CD14-positive monocyte (primary cell): ENCODE measurements at regions of chr12 and their contacts with region 1.

Region 1: DNA sequence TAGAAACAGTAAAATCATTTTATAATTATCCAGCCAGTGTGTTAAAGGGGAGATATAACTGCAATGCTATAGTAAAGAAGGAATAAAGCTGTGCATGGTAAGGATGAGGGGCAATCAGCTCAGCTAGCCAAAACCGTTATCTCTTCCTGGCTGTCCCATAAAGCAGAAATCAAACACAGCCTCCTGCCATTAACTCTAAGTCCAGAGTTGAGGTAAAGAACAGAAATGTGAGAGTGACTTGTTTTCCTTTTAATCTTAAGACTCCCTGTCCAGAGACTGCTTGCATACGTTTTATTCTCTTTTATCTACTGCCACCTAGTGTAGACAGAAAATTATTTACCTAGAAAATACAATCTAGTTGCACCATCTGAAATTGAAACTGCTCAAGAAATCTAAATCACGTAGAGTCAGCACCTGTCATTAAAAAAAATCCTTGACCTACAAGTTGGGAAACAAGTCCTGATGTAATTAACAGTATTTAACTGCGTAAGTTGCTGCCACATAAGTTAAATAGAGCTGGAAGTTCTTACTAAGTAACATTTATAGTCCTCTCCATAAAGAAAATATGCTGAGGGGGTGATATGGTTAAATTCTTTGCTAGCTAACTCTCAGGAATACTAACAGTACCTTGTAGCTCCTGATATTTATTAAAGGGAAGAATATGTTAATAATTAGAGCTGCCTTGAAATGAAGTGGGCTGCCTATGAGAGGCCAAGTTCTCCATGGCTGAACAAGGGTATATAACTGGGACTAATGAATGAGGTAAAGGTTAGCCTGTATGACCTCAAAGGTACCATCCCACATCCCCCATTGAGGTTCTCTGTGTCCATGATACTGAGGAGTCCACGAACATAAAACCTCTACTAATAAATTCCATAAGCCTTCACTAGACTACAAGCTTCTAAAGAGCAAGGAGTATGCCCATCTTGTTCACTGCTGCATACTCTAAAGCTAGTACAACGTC is 62.7 kb downstream of the GALNT4 start:
- DNase-seq: peak; percentile 45 to 73 (median 59)
- H3K4me3 ChIP-seq: peak overlapping the region in 1 of 3 experiments; percentile 13
- H3K4me3 Mint-ChIP-seq: peak overlapping the region in 1 of 2 donors; percentile 71
- H3K27ac ChIP-seq: no peak overlapping the region
- H3K27ac Mint-ChIP-seq: peak overlapping the region in 3 of 7 donors; percentile 17 to 58 (median 51)
- H3K4me1 ChIP-seq: peaks cover 7 to 10% of the 10 kb centered on the region in 2 donors
- H3K4me1 Mint-ChIP-seq: peaks cover 13% of the 10 kb centered on the region
- H3K27me3 ChIP-seq: no peaks in the 10 kb centered on the region
- H3K27me3 Mint-ChIP-seq: no peaks in the 10 kb centered on the region
- CTCF ChIP-seq: peak; percentile 81

Region 2: DNA sequence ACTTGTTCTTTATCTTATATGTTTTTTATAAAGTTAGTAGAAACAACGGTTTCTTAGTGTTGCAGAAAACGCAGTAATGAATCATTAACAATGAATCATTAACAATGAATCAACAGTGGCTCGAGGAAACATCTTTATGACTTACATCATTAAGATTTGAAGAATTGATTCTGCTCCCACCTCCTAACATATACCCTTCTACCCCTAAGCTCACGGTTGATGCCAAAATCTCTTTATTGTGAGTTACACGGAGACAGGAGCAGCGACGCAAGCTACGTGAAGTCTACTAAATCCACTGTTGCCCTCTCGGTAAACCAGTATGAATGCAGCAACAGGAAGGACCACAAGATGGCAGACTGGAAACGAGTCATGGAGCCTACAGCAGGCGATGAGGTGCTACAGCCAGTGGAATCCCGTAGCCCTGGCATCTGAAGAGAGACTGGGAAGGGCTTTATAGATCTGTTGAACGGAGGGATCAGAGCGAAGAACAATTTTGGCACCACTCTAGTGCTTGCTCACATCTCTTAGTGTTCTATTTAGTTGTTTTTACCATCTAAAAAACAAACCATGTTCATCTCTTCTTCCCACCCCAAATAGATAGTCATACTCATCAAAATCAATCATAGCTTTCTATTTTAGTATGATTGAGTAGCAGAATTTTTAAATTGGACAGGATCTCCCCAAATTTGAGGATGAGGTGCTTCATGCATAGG is 442.4 kb before region 1 on chr12:
- intact Hi-C with region 1: loop called (anchors 5 kb)
- DNase-seq: peak; percentile 53 to 69 (median 68)
- H3K4me3 ChIP-seq: peak overlapping the region in 1 of 3 experiments; percentile 52
- H3K4me3 Mint-ChIP-seq: no peak overlapping the region
- H3K27ac ChIP-seq: no peak overlapping the region
- H3K27ac Mint-ChIP-seq: no peak overlapping the region
- H3K4me1 ChIP-seq: peaks cover 7 to 10% of the 10 kb centered on the region in 2 donors
- H3K4me1 Mint-ChIP-seq: peaks cover 2% of the 10 kb centered on the region
- H3K27me3 ChIP-seq: peaks cover 0 to 2% of the 10 kb centered on the region in 2 donors
- H3K27me3 Mint-ChIP-seq: peaks cover 0 to 9% (median 5%) of the 10 kb centered on the region in 3 donors
- CTCF ChIP-seq: peak; percentile 86

Region 3: DNA sequence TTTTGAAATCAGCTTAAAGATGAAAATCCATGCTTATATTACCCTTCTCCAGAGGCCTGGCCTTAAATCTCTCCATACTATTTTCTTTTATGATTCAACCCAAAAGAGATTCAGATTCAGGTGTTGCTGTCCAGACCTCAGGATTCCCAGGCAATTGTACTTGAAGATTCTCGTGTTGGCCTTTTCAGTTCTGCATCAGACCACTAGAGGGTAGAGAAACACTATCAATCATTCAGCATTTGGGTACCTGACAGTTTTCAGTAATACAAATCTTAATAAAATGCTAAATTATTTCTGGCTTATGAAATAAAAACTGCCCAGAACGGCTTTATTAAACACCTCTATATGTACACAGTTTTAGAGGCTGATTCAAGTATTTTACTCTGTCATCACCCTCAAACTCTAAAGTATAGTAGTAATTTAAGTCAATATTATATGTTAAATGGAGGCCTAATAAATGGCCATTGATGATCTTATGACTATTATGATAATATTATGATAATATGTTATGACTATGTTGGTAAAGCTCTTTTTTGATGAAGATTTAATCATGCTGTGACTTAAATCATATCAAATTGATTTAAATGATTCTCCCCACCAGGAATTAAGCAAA is 410.8 kb before region 1 on chr12:
- intact Hi-C with region 1: loop called (anchors 5 kb)
- DNase-seq: peak; percentile 55 to 70 (median 64)
- H3K4me3 ChIP-seq: no peak overlapping the region
- H3K4me3 Mint-ChIP-seq: no peak overlapping the region
- H3K27ac ChIP-seq: no peak overlapping the region
- H3K27ac Mint-ChIP-seq: peak overlapping the region in 3 of 7 donors; percentile 37 to 45 (median 44)
- H3K4me1 ChIP-seq: peaks cover 12% of the 10 kb centered on the region in 2 donors
- H3K4me1 Mint-ChIP-seq: peaks cover 21% of the 10 kb centered on the region
- H3K27me3 ChIP-seq: no peaks in the 10 kb centered on the region
- H3K27me3 Mint-ChIP-seq: peaks cover 0 to 6% (median 2%) of the 10 kb centered on the region in 3 donors
- CTCF ChIP-seq: peak; percentile 95

Region 4: GRCh38 chr12:89345830-89346740 is 115.8 kb before region 1 on chr12:
- intact Hi-C with region 1: loop called in 1 of 2 experiments (anchors 10 kb)
- DNase-seq: peak; percentile 93 to 98 (median 94)
- H3K4me3 ChIP-seq: peak overlapping the region in 2 of 3 experiments; percentile 85 to 99
- H3K4me3 Mint-ChIP-seq: peak overlapping the region; percentile 61 to 99
- H3K27ac ChIP-seq: peak overlapping the region; percentile 48 to 79
- H3K27ac Mint-ChIP-seq: peak overlapping the region; percentile 90 to 95 (median 94)
- H3K4me1 ChIP-seq: peaks cover 50 to 58% of the 10 kb centered on the region in 2 donors
- H3K4me1 Mint-ChIP-seq: peaks cover 55% of the 10 kb centered on the region
- H3K27me3 ChIP-seq: no peaks in the 10 kb centered on the region
- H3K27me3 Mint-ChIP-seq: peaks cover 0 to 9% (median 2%) of the 10 kb centered on the region in 3 donors
- CTCF ChIP-seq: no peak

Region 5: GRCh38 chr12:89427508-89428156 is 34.3 kb before region 1 on chr12:
- intact Hi-C with region 1: no loop called
- DNase-seq: peak; percentile 36 to 71 (median 50)
- H3K4me3 ChIP-seq: peak overlapping the region in 2 of 3 experiments; percentile 36 to 58
- H3K4me3 Mint-ChIP-seq: peak overlapping the region; percentile 48 to 79
- H3K27ac ChIP-seq: peak overlapping the region; percentile 51 to 85
- H3K27ac Mint-ChIP-seq: peak overlapping the region; percentile 84 to 96 (median 93)
- H3K4me1 ChIP-seq: peaks cover 41 to 48% of the 10 kb centered on the region in 2 donors
- H3K4me1 Mint-ChIP-seq: peaks cover 39% of the 10 kb centered on the region
- H3K27me3 ChIP-seq: no peaks in the 10 kb centered on the region
- H3K27me3 Mint-ChIP-seq: peaks cover 0 to 3% (median 0%) of the 10 kb centered on the region in 3 donors
- CTCF ChIP-seq: no peak